ENCODE measurements at regions of chr22 and their contacts with region 1.

Region 1: GRCh38 chr22:25048659-25049647 is 96.4 kb downstream of the KIAA1671 start:
- DNase-seq: no peak
- ATAC-seq: peak; percentile 97
- H3K4me3 ChIP-seq: no peak overlapping the region
- H3K27ac ChIP-seq: no peak overlapping the region
- H3K4me1 ChIP-seq: no peaks in the 10 kb centered on the region
- H3K27me3 ChIP-seq: no peaks in the 10 kb centered on the region
- CTCF ChIP-seq: peak; percentile 86 to 88 (median 87)
- EP300 ChIP-seq: no peak
- POLR2A ChIP-seq: no peak
- RAD21 ChIP-seq: peak; percentile 73

Region 2: DNA sequence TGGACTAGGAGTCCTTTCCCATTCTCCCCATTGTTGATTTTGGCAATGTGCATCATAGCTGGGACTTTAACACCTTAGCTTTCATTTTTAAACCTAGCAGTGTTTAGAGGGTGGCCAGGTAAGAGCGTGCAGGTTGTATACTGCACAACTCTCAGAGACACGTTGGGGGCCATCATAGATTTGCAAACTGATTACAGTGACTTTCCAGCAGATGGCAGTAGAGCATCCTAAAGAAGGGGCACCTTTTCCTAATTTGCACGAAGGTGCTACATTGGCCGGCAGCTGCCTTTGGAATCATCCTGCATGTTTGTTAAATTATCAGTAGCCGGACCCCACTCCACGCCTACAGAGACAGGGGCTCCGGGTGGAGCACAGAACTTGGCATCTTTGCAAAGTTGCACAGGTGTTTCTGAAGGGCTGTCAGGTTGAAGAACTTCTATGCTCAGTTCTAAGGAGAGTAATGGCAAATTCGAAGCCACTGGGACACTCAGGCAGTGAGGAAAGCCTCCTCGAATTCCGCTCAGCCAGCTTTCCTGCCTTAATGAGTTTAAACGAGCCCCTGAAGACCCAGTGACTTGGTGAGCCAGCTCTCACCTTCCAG is 110.1 kb before region 1 on chr22:
- CTCF ChIA-PET with region 1: interaction called, 80 read pairs
- POLR2A ChIA-PET with region 1: no interaction called
- RAD21 ChIA-PET with region 1: interaction called, 26 read pairs
- SMC1A ChIA-PET with region 1: interaction called, 34 read pairs
- in situ Hi-C with region 1: no loop called
- intact Hi-C with region 1: loop called (anchors 1 kb)
- DNase-seq: no peak
- ATAC-seq: peak; percentile 76
- H3K4me3 ChIP-seq: no peak overlapping the region
- H3K27ac ChIP-seq: no peak overlapping the region
- H3K4me1 ChIP-seq: no peaks in the 10 kb centered on the region
- H3K27me3 ChIP-seq: no peaks in the 10 kb centered on the region; a peak in 1 of 4 replicates
- CTCF ChIP-seq: peak; percentile 65 to 75 (median 74)
- EP300 ChIP-seq: no peak
- POLR2A ChIP-seq: no peak
- RAD21 ChIP-seq: peak; percentile 67

Region 3: DNA sequence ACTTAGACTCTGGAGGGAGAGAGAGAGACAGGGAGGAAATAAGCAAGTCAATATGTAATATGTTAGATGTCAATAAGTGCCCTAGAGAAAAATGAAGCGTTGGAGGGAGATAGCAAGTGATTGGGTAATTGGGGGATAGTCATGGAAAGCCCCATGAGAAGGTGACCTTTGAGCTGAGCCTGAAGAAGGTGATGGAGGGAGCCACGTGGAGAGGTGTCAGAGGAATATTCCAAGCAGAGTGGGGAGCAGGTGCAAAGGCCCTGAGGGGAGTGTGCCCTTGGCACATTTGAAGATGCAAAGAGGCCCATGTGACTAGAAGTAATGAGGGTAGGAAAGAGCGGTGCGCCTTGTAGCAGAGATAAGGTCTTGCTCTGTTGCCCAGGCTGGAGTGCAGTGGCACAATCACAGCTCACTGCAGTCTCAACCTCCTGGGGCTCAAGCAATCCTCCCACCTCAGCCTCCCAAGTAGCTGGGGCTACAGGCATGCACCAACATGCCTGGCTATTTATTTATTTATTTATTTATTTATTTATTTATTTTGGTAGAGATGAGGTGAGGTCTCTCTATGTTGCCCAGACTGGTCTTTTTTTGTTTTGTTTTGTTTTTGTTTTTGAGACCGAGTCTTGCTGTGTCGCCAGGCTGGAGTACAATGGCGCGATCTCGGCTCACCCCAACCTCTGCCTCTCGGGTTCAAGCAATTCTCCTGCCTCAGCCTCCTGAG is 104.6 kb before region 1 on chr22:
- CTCF ChIA-PET with region 1: interaction called, 80 read pairs
- POLR2A ChIA-PET with region 1: no interaction called
- RAD21 ChIA-PET with region 1: interaction called, 4 read pairs
- SMC1A ChIA-PET with region 1: interaction called, 34 read pairs
- in situ Hi-C with region 1: no loop called
- intact Hi-C with region 1: no loop called
- DNase-seq: no peak
- ATAC-seq: no peak
- H3K4me3 ChIP-seq: no peak overlapping the region
- H3K27ac ChIP-seq: no peak overlapping the region
- H3K4me1 ChIP-seq: no peaks in the 10 kb centered on the region
- H3K27me3 ChIP-seq: no peaks in the 10 kb centered on the region; a peak in 2 of 4 replicates
- CTCF ChIP-seq: no peak
- EP300 ChIP-seq: no peak
- POLR2A ChIP-seq: no peak
- RAD21 ChIP-seq: no peak

Region 4: DNA sequence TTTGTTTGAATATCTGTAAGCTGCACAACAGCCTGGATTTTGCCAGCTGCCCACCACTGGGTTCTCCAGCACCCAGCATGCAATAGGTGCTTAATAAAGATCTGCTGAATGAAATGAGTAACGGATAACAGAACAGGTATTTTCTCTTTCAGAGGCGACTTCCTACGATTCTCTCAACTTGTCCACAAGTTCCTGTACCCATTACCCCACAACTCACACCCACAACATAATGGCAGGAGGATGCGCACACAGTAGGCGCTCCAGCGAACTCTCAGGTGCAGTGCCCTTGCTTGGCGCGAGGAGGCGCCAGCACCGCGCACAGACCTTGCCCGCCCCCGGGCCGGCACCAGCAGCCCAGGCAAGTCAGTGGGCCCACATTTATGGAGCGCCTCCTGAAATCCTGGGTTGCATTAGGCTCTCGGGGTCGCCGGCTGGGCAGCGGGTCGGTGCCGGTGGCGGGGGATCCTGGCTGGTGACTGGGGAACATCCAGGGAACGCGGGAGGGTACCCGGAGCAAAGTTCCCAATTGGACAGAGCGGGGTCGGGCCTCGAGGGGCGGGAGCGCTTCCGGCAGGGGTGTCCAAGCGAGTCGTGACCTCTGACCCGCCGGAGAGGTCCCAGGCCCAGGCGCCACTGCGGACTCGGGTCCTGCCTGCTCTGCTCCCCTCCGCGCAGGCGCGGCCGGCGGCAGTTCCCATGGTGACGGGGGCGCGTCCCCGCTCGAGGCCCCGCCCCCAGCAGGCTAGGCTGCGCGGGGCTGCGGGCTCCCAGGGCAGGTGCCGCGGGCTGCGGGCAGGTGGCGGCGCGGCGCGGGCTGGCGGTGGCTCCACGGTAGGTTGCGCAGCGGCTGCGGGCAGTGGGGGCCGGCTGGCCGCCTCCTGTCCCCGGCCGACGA is 96.8 kb before region 1 on chr22 and contains the start of gene KIAA1671:
- CTCF ChIA-PET with region 1: interaction called, 4 read pairs
- POLR2A ChIA-PET with region 1: no interaction called
- RAD21 ChIA-PET with region 1: no interaction called
- SMC1A ChIA-PET with region 1: no interaction called
- in situ Hi-C with region 1: no loop called
- intact Hi-C with region 1: loop called (anchors 1 kb)
- DNase-seq: no peak
- ATAC-seq: peak; percentile 98
- H3K4me3 ChIP-seq: peak within 1 kb of the TSS; percentile 55
- H3K27ac ChIP-seq: no peak within 1 kb of the TSS
- H3K4me1 ChIP-seq: no peaks in the 10 kb centered on the region
- H3K27me3 ChIP-seq: peaks cover 0 to 4% of the 10 kb centered on the region in 2 experiments
- CTCF ChIP-seq: peak; percentile 72 to 88 (median 82)
- EP300 ChIP-seq: no peak
- POLR2A ChIP-seq: no peak
- RAD21 ChIP-seq: peak; percentile 30
- polyA plus RNA-seq, gene KIAA1671: 0.05 TPM